CD14-positive monocyte (primary cell): ENCODE measurements at regions of chr20 and their contacts with region 1.

Region 1: GRCh38 chr20:56460459-56460858 is 8.0 kb upstream of the RTF2 start:
- DNase-seq: no peak
- H3K4me3 ChIP-seq: no peak overlapping the region
- H3K4me3 Mint-ChIP-seq: no peak overlapping the region
- H3K27ac ChIP-seq: no peak overlapping the region
- H3K27ac Mint-ChIP-seq: no peak overlapping the region
- H3K4me1 ChIP-seq: peaks cover 10 to 16% of the 10 kb centered on the region in 2 donors
- H3K4me1 Mint-ChIP-seq: peaks cover 12% of the 10 kb centered on the region
- H3K27me3 ChIP-seq: no peaks in the 10 kb centered on the region
- H3K27me3 Mint-ChIP-seq: peaks cover 1 to 4% (median 2%) of the 10 kb centered on the region in 3 donors
- CTCF ChIP-seq: no peak

Region 2: GRCh38 chr20:56306912-56307311 is 153.5 kb before region 1 on chr20:
- intact Hi-C with region 1: no loop called
- DNase-seq: no peak
- H3K4me3 ChIP-seq: no peak overlapping the region
- H3K4me3 Mint-ChIP-seq: no peak overlapping the region
- H3K27ac ChIP-seq: no peak overlapping the region
- H3K27ac Mint-ChIP-seq: no peak overlapping the region
- H3K4me1 ChIP-seq: no peaks in the 10 kb centered on the region
- H3K4me1 Mint-ChIP-seq: no peaks in the 10 kb centered on the region
- H3K27me3 ChIP-seq: peaks cover 0 to 2% of the 10 kb centered on the region in 2 donors
- H3K27me3 Mint-ChIP-seq: peaks cover 0 to 7% (median 2%) of the 10 kb centered on the region in 3 donors
- CTCF ChIP-seq: no peak

Region 3: GRCh38 chr20:56422076-56422823 is 38.2 kb before region 1 on chr20:
- intact Hi-C with region 1: loop called (anchors 5 kb)
- DNase-seq: peak; percentile 46 to 78 (median 76)
- H3K4me3 ChIP-seq: peak overlapping the region in 1 of 3 experiments; percentile 29
- H3K4me3 Mint-ChIP-seq: peak overlapping the region in 1 of 2 donors; percentile 62
- H3K27ac ChIP-seq: no peak overlapping the region
- H3K27ac Mint-ChIP-seq: peak overlapping the region in 6 of 7 donors; percentile 26 to 83 (median 72)
- H3K4me1 ChIP-seq: peaks cover 84 to 88% of the 10 kb centered on the region in 2 donors
- H3K4me1 Mint-ChIP-seq: peaks cover 85% of the 10 kb centered on the region
- H3K27me3 ChIP-seq: peaks cover 7 to 9% of the 10 kb centered on the region in 2 donors
- H3K27me3 Mint-ChIP-seq: peaks cover 16 to 30% (median 18%) of the 10 kb centered on the region in 3 donors
- CTCF ChIP-seq: no peak